Heart right ventricle (tissue), 16 donors: ENCODE measurements at regions of chr6 and their contacts with region 1.

Region 1: GRCh38 chr6:9412951-9413559 is 977.7 kb upstream of the SLC35B3 start:
- DNase-seq: peak; percentile 7
- ATAC-seq: peak in 1 of 8 donors; percentile 59
- H3K4me3 ChIP-seq: no peak overlapping the region
- H3K27ac ChIP-seq: no peak overlapping the region
- H3K4me1 ChIP-seq: no peaks in the 10 kb centered on the region
- H3K27me3 ChIP-seq: no peaks in the 10 kb centered on the region
- CTCF ChIP-seq: peak in 8 of 9 donors; percentile 26 to 58 (median 48)

Region 2: GRCh38 chr6:8900056-8900455 is 513.0 kb before region 1 on chr6:
- intact Hi-C with region 1: no loop called
- DNase-seq: no peak
- ATAC-seq: no peak
- H3K4me3 ChIP-seq: no peak overlapping the region
- H3K27ac ChIP-seq: no peak overlapping the region
- H3K4me1 ChIP-seq: no peaks in the 10 kb centered on the region
- H3K27me3 ChIP-seq: no peaks in the 10 kb centered on the region
- CTCF ChIP-seq: no peak

Region 3: DNA sequence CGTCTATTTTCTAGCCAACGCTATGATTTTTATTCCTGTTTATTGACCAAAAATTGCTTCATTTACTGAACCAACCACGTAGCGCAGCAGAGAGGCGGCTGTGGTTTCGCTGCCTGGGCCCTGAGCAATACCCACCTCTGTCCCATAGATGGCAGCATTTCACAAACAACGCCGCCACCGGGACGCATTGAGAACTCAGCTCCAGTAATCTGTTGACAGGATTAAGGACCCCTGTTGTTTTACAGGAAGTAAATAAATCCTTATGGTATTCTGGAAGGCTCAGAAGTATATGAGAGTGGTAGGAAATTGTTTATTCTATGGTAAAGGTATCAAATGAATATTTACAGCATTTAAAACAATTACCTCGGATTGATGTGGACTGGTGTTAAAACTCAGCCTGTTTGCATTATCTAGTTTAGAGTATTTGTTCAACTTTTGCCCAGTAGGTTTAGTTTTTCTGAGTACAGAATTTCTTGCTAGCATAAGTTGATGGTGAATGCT is 429.8 kb before region 1 on chr6:
- intact Hi-C with region 1: loop called in 1 of 10 experiments (anchors 5 kb)
- DNase-seq: peak; percentile 29 to 31
- ATAC-seq: peak in 6 of 8 donors; percentile 67 to 76 (median 70)
- H3K4me3 ChIP-seq: no peak overlapping the region
- H3K27ac ChIP-seq: no peak overlapping the region
- H3K4me1 ChIP-seq: peaks cover 0 to 7% (median 0%) of the 10 kb centered on the region in 9 donors
- H3K27me3 ChIP-seq: peaks cover 0 to 30% (median 4%) of the 10 kb centered on the region in 7 donors
- CTCF ChIP-seq: peak; percentile 55 to 96 (median 91)

Region 4: GRCh38 chr6:9205645-9206044 is 207.4 kb before region 1 on chr6:
- intact Hi-C with region 1: no loop called
- DNase-seq: no peak
- ATAC-seq: no peak
- H3K4me3 ChIP-seq: no peak overlapping the region
- H3K27ac ChIP-seq: no peak overlapping the region
- H3K4me1 ChIP-seq: no peaks in the 10 kb centered on the region
- H3K27me3 ChIP-seq: no peaks in the 10 kb centered on the region
- CTCF ChIP-seq: no peak

Region 5: DNA sequence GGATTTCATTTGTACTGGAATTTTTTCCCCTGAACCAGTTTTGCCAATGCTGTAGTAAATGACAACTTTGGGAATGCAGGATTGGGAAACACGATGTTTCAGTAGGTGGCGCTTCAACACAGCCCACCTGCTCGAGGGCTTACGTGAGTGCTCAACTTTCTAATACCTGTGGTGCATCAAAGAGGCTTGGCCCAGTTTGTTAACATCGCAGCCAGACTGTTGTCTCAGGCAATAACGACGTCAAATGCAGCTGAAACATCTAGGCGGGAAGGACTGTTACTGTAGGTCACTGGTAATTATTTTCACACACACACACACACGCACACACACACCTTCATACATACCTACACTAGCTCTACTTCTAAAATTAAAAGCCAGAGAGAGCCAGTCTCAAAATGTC is 162.2 kb before region 1 on chr6:
- intact Hi-C with region 1: loop called (anchors 2 to 10 kb)
- DNase-seq: peak in 1 of 2 donors; percentile 11
- ATAC-seq: peak in 1 of 8 donors; percentile 35
- H3K4me3 ChIP-seq: no peak overlapping the region
- H3K27ac ChIP-seq: no peak overlapping the region
- H3K4me1 ChIP-seq: no peaks in the 10 kb centered on the region
- H3K27me3 ChIP-seq: no peaks in the 10 kb centered on the region
- CTCF ChIP-seq: peak in 8 of 9 donors; percentile 19 to 54 (median 50)

Region 6: GRCh38 chr6:10886691-10887535 is 1473.9 kb after region 1 on chr6 and contains the start of gene SYCP2L:
- intact Hi-C with region 1: loop called in 1 of 10 experiments (anchors 5 kb)
- DNase-seq: peak; percentile 22 to 39
- ATAC-seq: peak; percentile 41 to 78 (median 65)
- H3K4me3 ChIP-seq: peak within 1 kb of the TSS; percentile 29 to 62 (median 56)
- H3K27ac ChIP-seq: peak within 1 kb of the TSS in 3 of 10 donors; percentile 25 to 57 (median 26)
- H3K4me1 ChIP-seq: peaks cover 0 to 38% (median 22%) of the 10 kb centered on the region in 9 donors
- H3K27me3 ChIP-seq: peaks cover 14 to 75% (median 67%) of the 10 kb centered on the region in 7 donors
- CTCF ChIP-seq: peak in 7 of 9 donors; percentile 17 to 56 (median 33)
- total RNA-seq, gene SYCP2L: 0.11 to 2.4 (median 0.37) TPM